Panc1 (cell line): ENCODE measurements at regions of chr7 and their contacts with region 1.

Region 1: DNA sequence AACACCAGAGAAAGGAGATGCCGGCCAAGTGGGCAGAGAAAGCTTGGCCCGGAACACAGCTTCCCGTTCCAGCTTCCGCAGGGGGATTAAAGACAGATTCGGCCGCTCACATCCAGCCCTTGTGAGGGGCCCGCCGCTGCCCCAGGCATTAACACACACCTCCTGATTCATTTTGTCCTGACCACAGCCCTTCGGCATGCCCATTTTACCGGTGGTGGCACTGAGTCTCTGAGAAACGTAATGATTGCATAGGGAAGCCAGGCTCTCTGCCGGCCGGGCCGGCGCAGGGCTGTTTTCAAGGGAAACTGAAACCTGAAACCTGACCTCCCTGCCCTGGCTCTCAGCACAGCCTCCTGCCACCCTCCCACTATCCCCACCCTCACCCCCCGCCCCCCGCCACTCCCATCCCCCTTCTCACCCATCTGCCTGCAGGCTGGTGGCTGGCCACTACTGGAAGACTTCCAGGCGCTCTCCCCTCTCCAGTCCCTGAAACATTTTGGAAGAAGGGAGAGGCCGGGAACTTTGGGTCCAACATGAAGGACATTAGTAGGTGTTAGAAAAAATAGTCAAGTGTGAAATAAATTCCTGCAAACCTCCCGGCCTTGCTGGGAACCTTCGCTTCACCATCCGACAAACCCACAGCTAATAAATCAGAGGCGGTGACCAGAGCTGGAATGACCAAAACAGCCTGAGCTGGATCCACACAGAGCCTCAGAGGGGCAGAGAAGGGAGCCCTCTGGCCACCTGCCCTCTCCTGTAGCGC is 83.5 kb upstream of the CUX1 start:
- DNase-seq: no peak
- ATAC-seq: no peak
- H3K4me3 ChIP-seq: no peak overlapping the region
- H3K27ac ChIP-seq: no peak overlapping the region
- H3K4me1 ChIP-seq: no peaks in the 10 kb centered on the region
- H3K27me3 ChIP-seq: no peaks in the 10 kb centered on the region
- CTCF ChIP-seq: no peak

Region 2: DNA sequence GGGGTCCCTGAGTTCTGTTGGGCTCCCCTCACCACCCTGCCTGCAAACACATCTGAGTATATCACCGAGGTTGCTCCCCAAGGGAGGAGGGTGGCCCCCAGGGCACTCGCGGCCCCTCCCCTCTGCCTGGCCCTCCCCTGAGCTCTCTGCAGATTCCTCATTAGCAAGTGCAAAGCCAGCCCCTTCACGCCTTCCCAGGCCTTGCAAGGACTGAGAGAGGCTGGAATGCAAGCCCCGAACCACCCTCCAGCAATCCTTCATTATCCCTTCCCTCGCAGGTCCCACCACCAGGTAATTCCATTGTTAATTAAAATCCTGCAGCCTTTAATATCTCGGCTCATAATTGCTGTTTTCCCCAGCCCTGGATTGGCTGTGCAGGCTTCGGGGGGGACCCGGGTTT is 69.5 kb before region 1 on chr7:
- CTCF ChIA-PET with region 1: no interaction called
- POLR2A ChIA-PET with region 1: interaction called, 10 read pairs
- in situ Hi-C with region 1: no loop called
- intact Hi-C with region 1: no loop called
- DNase-seq: no peak
- ATAC-seq: no peak
- H3K4me3 ChIP-seq: no peak overlapping the region
- H3K27ac ChIP-seq: no peak overlapping the region
- H3K4me1 ChIP-seq: no peaks in the 10 kb centered on the region
- H3K27me3 ChIP-seq: no peaks in the 10 kb centered on the region
- CTCF ChIP-seq: no peak

Region 3: DNA sequence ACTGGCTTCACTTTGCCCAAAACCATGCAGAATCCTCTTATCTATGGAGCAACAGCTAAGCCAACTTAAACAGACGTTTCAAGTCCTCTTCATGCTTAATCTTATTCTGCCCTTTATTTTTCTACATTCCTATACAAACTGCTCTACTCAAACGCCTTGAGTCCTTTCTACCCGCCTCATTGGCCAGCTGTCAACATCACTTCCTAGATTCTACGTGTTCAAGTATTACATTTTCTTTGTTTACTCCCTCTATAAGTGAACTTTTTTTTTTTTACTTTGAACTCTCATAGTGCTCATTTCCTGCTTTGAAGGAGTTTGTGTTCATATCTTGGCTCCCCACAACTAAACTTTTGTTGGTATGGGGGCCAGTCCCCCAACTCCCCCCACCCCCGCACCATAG is 1741.1 kb after region 1 on chr7:
- CTCF ChIA-PET with region 1: no interaction called
- POLR2A ChIA-PET with region 1: no interaction called
- in situ Hi-C with region 1: no loop called
- intact Hi-C with region 1: no loop called
- DNase-seq: no peak
- ATAC-seq: no peak
- H3K4me3 ChIP-seq: no peak overlapping the region
- H3K27ac ChIP-seq: no peak overlapping the region
- H3K4me1 ChIP-seq: no peaks in the 10 kb centered on the region
- H3K27me3 ChIP-seq: peaks cover 18% of the 10 kb centered on the region
- CTCF ChIP-seq: no peak